Thyroid gland (tissue), 4 donors: ENCODE measurements at regions of chr2 and their contacts with region 1.

Region 1: GRCh38 chr2:109508556-109508955 is 105.2 kb downstream of the SEPTIN10 start:
- DNase-seq: no peak
- H3K4me3 ChIP-seq: no peak overlapping the region
- H3K27ac ChIP-seq: no peak overlapping the region
- H3K4me1 ChIP-seq: peaks cover 0 to 6% of the 10 kb centered on the region in 2 donors
- H3K27me3 ChIP-seq: no peaks in the 10 kb centered on the region
- CTCF ChIP-seq: no peak
- POLR2A ChIP-seq: no peak

Region 2: DNA sequence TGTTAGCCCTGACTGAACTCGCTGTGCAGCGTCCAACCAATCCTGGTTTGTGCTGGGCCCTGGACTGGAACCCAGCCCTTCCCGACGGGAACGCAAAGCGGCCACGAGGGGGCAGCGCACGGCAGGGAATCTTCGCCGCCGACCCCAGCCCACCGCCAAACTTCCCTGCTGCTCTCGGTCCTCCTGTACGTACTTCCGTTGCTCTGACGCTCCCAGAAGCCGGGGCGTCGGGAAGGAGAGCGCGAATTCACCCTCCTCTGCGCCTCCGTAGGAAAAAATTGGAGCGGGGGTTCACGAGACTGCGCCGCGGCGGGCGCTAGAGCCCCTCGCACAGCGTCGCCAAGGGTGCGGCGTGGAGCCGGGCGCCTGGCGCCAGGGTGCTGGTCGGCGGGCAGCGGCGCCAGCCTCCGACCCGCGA is 380.5 kb before region 1 on chr2:
- intact Hi-C with region 1: loop called (anchors 2 kb)
- DNase-seq: peak; percentile 65 to 66
- H3K4me3 ChIP-seq: peak overlapping the region; percentile 41 to 60 (median 45)
- H3K27ac ChIP-seq: peak overlapping the region in 1 of 3 donors; percentile 34
- H3K4me1 ChIP-seq: peaks cover 0 to 21% of the 10 kb centered on the region in 2 donors
- H3K27me3 ChIP-seq: no peaks in the 10 kb centered on the region
- CTCF ChIP-seq: peak; percentile 58 to 84 (median 77)
- POLR2A ChIP-seq: no peak

Region 3: DNA sequence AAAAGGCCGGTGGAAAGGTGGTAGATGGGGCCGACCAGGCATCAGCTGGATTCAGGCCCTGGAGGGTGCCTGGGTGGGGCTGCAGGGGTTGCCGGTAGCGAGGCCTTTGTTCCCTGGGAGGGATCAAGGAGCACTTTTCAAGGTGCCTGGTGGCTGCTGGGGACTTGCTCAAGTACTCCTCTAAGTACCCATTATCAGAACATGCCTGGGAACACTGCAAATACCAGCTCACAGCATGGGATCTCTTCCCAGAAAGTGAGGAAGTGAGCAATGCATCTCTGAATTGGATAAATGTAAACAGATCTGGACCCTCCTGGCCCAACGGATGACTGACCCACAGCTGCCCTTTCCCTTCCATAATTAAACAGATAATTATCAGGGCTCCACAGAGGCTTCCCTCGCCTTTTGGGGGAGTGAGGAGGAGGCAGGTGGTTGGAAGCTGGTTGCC is 169.0 kb before region 1 on chr2:
- intact Hi-C with region 1: no loop called
- DNase-seq: no peak
- H3K4me3 ChIP-seq: no peak overlapping the region
- H3K27ac ChIP-seq: no peak overlapping the region
- H3K4me1 ChIP-seq: peaks cover 0 to 6% of the 10 kb centered on the region in 2 donors
- H3K27me3 ChIP-seq: no peaks in the 10 kb centered on the region
- CTCF ChIP-seq: no peak
- POLR2A ChIP-seq: no peak

Region 4: GRCh38 chr2:109368798-109369197 is 139.8 kb before region 1 on chr2:
- intact Hi-C with region 1: no loop called
- DNase-seq: no peak
- H3K4me3 ChIP-seq: no peak overlapping the region
- H3K27ac ChIP-seq: no peak overlapping the region
- H3K4me1 ChIP-seq: peaks cover 4 to 9% of the 10 kb centered on the region in 2 donors
- H3K27me3 ChIP-seq: no peaks in the 10 kb centered on the region
- CTCF ChIP-seq: no peak
- POLR2A ChIP-seq: no peak

Region 5: GRCh38 chr2:109604597-109604996 is 96.0 kb after region 1 on chr2:
- intact Hi-C with region 1: no loop called
- DNase-seq: peak; percentile 41 to 55
- H3K4me3 ChIP-seq: no peak overlapping the region
- H3K27ac ChIP-seq: no peak overlapping the region
- H3K4me1 ChIP-seq: peaks cover 0 to 10% of the 10 kb centered on the region in 2 donors
- H3K27me3 ChIP-seq: no peaks in the 10 kb centered on the region
- CTCF ChIP-seq: no peak
- POLR2A ChIP-seq: no peak